Colonic mucosa (tissue), 4 donors: ENCODE measurements at regions of chr15 and their contacts with region 1.

Region 1: DNA sequence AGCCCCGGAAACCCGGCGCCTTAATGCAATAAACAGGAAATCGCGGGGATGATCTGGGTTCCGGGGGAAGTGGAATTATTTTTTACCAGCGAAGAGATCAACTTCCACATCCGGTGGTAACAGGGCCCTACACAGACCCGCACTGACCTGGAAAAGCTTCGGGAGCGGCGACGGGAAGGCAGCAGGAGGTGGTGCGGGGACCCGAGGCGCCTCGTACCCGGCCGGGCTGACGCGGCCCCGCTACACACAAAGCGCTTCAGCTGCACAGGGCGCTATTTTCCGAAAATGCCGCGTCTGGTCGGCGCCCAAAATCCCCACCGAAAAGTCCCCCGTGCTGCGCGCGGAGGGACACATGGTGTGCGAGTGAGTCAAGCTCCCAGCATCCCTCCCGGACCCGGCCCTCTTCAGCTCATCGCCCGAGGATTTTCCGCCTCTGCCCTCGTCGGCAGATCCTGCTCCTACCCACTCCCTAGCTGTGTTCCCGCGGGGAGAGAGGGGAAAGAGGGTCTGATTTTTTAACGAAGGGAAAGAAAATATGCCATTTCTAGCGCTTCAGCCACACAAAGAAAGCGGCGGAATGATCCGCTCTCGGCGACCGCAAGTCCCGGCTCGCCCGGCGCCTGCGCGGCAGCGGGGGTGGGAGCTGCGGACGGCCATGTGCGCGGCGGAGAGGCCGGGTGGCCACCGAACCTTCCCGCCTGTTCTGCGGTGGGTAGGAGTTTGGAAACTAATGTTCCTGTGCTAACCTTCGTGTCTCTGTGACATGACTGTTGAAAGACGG is at the start of gene GABPB1:
- DNase-seq: peak; percentile 83
- H3K4me3 ChIP-seq: peak within 1 kb of the TSS; percentile 97
- H3K27ac ChIP-seq: peak within 1 kb of the TSS; percentile 100
- H3K4me1 ChIP-seq: no peaks in the 10 kb centered on the region
- H3K27me3 ChIP-seq: no peaks in the 10 kb centered on the region
- CTCF ChIP-seq: no peak
- total RNA-seq, gene GABPB1: 13.6 to 15.7 TPM

Region 2: GRCh38 chr15:50424066-50424890 is 69.2 kb after region 1 on chr15 and contains the start of gene USP8:
- intact Hi-C with region 1: loop called (anchors 5 kb)
- DNase-seq: peak; percentile 97
- H3K4me3 ChIP-seq: peak within 1 kb of the TSS; percentile 75
- H3K27ac ChIP-seq: peak within 1 kb of the TSS; percentile 88
- H3K4me1 ChIP-seq: peaks cover 2% of the 10 kb centered on the region
- H3K27me3 ChIP-seq: no peaks in the 10 kb centered on the region
- CTCF ChIP-seq: no peak
- total RNA-seq, gene USP8: 54.4 to 98.9 TPM